HepG2 (cell line): ENCODE measurements at regions of chr18 and their contacts with region 1.

Region 1: GRCh38 chr18:2302614-2303516 is 268.4 kb downstream of the METTL4 start:
- DNase-seq: no peak
- ATAC-seq: no peak
- H3K4me3 ChIP-seq: no peak overlapping the region
- H3K27ac ChIP-seq: no peak overlapping the region
- H3K4me1 ChIP-seq: no peaks in the 10 kb centered on the region
- H3K27me3 ChIP-seq: no peaks in the 10 kb centered on the region; a peak in 1 of 5 replicates
- CTCF ChIP-seq: no peak
- EP300 ChIP-seq: no peak
- POLR2A ChIP-seq: no peak
- RAD21 ChIP-seq: no peak

Region 2: DNA sequence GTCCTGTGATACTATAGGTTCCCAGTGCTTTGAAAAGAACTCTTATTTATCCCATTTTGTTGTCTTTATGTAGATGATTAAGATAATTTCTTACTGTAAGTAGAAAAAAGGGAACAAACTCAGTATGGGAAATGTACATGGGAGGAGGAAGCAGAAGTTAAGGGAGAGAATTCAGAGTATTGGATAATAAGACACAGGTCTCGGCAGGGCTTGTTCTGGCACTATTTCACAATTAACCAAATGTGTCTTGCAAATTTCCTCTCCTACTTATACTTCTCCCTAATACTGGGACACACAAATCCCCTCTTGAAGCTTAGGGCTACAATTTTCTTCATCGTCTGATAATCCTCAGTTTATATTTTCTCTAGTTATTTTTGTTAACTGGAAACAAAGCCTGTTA is 654.2 kb before region 1 on chr18:
- CTCF ChIA-PET with region 1: no interaction called
- POLR2A ChIA-PET with region 1: no interaction called
- in situ Hi-C with region 1: no loop called
- intact Hi-C with region 1: no loop called
- DNase-seq: no peak
- ATAC-seq: no peak
- H3K4me3 ChIP-seq: no peak overlapping the region
- H3K27ac ChIP-seq: no peak overlapping the region
- H3K4me1 ChIP-seq: no peaks in the 10 kb centered on the region
- H3K27me3 ChIP-seq: no peaks in the 10 kb centered on the region
- CTCF ChIP-seq: no peak
- EP300 ChIP-seq: no peak
- POLR2A ChIP-seq: no peak
- RAD21 ChIP-seq: no peak

Region 3: DNA sequence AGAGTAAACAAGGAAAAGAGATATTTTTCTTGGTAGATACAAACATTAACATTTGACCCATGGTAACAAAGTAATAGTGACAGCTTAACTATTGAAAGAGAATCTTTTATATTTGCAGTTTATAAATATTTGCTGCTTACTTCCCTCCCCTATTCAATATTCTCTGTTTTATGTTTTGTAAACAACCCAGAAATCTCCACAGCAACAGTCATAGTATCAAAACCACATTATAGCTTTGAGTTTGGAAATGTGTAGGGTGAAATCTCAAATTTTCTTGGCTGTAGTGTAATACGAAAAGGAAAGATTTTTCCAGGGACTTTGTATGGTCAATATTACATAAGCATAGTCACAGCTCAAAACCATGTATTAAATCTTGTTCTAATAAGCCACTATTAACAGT is 242.8 kb before region 1 on chr18:
- CTCF ChIA-PET with region 1: no interaction called
- POLR2A ChIA-PET with region 1: no interaction called
- in situ Hi-C with region 1: no loop called
- intact Hi-C with region 1: no loop called
- DNase-seq: no peak
- ATAC-seq: no peak
- H3K4me3 ChIP-seq: no peak overlapping the region
- H3K27ac ChIP-seq: no peak overlapping the region
- H3K4me1 ChIP-seq: no peaks in the 10 kb centered on the region
- H3K27me3 ChIP-seq: no peaks in the 10 kb centered on the region; a peak in 1 of 5 replicates
- CTCF ChIP-seq: no peak
- EP300 ChIP-seq: no peak
- POLR2A ChIP-seq: no peak
- RAD21 ChIP-seq: no peak

Region 4: DNA sequence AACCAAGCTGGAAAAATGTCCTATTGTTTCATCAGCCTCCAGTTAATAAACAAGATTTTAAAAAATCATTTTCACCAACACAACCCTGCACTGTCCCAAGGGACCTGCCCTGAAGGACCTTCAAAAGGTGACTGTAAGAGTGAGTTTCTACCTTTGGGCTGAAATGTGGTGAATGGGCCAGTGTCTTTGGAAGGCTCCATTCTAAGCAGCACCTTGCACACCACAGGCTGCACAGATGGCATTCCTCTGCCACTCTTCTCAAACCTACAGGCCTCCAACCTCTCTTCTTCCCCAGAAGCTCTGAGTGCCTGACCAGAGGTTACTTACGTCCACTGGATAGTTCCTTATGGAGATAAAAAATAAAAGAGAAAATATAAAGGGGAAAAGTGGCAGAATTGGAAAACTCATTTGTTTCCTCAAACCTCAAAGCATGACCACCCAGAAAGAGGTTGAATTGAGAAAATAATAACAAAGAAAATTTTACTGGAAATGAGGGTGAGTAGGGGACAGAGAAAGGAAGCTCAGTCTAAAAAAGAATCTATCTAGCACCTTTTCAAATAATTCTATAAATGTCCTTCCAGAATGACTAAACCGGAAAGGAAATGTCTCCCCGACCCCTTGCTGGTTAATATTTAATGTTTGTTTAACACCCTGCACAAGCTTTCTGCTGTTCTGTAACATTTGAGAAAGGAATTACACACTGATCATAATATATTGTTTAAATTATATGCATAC is 92.7 kb after region 1 on chr18:
- CTCF ChIA-PET with region 1: no interaction called
- POLR2A ChIA-PET with region 1: no interaction called
- in situ Hi-C with region 1: no loop called
- intact Hi-C with region 1: loop called (anchors 5 kb)
- DNase-seq: no peak
- ATAC-seq: no peak
- H3K4me3 ChIP-seq: no peak overlapping the region
- H3K27ac ChIP-seq: no peak overlapping the region
- H3K4me1 ChIP-seq: no peaks in the 10 kb centered on the region
- H3K27me3 ChIP-seq: no peaks in the 10 kb centered on the region
- CTCF ChIP-seq: no peak
- EP300 ChIP-seq: no peak
- POLR2A ChIP-seq: no peak
- RAD21 ChIP-seq: no peak